Mammary epithelial cell (primary cell): ENCODE measurements at regions of chr1 and their contacts with region 1.

Region 1: DNA sequence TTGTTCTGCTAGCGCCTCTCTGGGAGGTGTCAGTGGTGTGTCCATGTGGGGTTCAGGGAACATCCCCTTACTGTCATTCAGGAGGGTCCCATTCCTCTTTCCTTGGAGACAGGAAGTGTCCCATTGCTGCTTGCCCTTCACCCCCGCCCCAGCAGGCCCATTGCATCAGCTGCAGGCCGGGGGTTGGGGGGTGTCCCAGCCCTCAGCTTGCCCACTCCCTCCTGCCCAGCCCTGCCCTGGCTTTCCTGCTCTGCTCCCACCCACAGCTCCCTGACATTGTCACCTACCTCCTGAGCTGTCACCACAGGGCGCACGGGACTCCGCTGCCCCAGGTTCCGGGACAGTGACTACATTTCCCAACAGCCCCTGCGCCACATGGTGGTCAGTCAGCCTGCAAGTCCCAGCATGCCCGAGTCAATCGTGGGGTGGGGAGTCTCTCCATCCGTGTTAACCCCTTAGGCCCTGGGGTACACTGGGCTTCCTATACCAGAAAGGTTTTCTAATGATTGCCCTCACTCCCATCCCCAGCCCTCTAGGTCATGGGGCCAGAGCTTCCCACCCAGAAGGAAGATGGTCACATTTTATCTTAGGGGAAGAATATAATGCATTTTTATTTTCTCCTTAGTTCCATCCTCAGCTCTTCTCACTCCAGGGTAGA is at the start of gene INPP5B:
- DNase-seq: no peak
- H3K4me3 ChIP-seq: no peak within 1 kb of the TSS
- H3K27ac ChIP-seq: no peak within 1 kb of the TSS
- H3K4me1 ChIP-seq: peaks cover 3% of the 10 kb centered on the region
- H3K27me3 ChIP-seq: no peaks in the 10 kb centered on the region
- CTCF ChIP-seq: no peak
- total RNA-seq, gene INPP5B: 11.2 to 17.5 TPM

Region 2: GRCh38 chr1:37931361-37932158 is 15.3 kb before region 1 on chr1:
- CTCF ChIA-PET with region 1: no interaction called
- dilution Hi-C with region 1: no loop called
- in situ Hi-C with region 1: no loop called
- intact Hi-C with region 1: loop called (anchors 2 kb)
- DNase-seq: peak; percentile 98
- H3K4me3 ChIP-seq: peak overlapping the region; percentile 77 to 96 (median 88)
- H3K27ac ChIP-seq: peak overlapping the region; percentile 56
- H3K4me1 ChIP-seq: peaks cover 25% of the 10 kb centered on the region
- H3K27me3 ChIP-seq: no peaks in the 10 kb centered on the region
- CTCF ChIP-seq: no peak

Region 3: DNA sequence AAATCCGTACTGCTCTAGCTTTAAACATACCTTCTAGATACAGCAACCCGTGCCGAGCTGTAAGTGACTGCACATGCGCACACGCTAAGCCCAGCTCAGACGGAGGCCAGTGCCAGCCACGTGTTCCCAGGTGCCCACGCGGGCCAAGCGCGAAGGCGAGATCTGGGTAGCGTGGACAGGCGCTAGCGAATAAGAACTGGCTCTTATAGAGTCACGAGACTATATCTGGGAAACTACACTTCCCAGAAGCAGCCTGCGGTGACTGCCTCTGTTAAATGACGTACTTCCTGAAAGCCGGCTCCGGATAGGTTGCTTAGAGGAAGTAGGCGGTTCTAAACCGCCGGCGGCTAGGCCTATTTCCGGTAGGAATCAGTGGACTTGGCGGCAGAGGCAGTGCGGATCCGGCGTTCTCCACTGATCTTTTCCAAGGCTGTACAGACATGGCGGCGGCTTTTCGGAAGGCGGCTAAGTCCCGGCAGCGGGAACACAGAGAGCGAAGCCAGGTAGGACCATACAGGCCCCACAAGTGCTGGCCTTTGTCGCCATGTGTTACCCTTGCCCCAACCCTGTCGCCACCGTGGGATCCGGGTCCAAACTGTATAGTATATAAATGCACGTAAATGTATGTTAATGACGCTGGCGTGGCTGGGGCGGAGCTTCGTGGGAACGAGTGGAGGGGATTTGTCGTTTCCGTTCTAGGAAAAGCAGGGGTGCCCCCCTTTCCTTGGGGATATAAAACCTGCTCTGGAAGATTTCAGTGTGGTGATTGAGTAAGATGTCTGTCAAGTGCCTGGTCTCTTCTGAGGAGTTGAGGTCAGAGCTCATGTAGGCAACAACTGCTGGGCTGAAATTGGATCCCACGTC is 65.8 kb after region 1 on chr1 and contains the start of gene UTP11:
- CTCF ChIA-PET with region 1: no interaction called
- dilution Hi-C with region 1: no loop called
- in situ Hi-C with region 1: no loop called
- intact Hi-C with region 1: no loop called
- DNase-seq: peak; percentile 99
- H3K4me3 ChIP-seq: peak within 1 kb of the TSS; percentile 72 to 77 (median 74)
- H3K27ac ChIP-seq: peak within 1 kb of the TSS; percentile 81
- H3K4me1 ChIP-seq: peaks cover 16% of the 10 kb centered on the region
- H3K27me3 ChIP-seq: no peaks in the 10 kb centered on the region
- CTCF ChIP-seq: no peak
- total RNA-seq, gene UTP11: 34.0 to 42.1 TPM